ENCODE measurements at regions of chr2 and their contacts with region 1.

Region 1: GRCh38 chr2:58939388-58939787 is 698.3 kb upstream of the FANCL start:
- DNase-seq: peak; percentile 90
- ATAC-seq: peak; percentile 95
- H3K4me3 ChIP-seq: no peak overlapping the region
- H3K27ac ChIP-seq: peak overlapping the region; percentile 29; the same call in 1 of the 2 replicates
- H3K4me1 ChIP-seq: 0 out of 2 replicates have a peak, but pooled peaks cover 2% of the 10 kb centered on the region
- H3K27me3 ChIP-seq: no peaks in the 10 kb centered on the region
- CTCF ChIP-seq: no peak
- POLR2A ChIP-seq: no peak
- RAD21 ChIP-seq: no peak

Region 2: DNA sequence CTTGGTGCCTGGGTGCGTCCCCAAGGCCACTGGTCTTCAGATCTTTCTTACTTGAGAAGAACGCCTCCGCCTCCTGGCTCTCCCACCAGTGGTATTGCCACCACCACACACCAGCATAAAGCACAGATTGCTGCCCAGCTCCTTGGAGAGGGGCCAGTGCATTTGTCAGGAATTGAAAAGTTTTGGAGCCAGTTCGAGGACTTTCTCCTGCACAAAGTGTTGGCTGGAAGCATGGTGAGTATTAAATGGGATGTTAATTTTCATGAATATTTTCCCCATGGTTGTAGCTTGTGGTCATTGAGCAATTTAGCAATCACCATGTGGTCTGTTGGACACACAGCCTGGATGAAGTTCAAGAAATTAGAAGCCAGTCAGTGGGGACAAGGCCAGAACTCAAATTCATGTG is 13.7 kb before region 1 on chr2:
- CTCF ChIA-PET with region 1: no interaction called
- POLR2A ChIA-PET with region 1: interaction called, 6 read pairs
- dilution Hi-C with region 1: no loop called
- in situ Hi-C with region 1: no loop called
- intact Hi-C with region 1: loop called (anchors 2 kb)
- DNase-seq: peak; percentile 46
- ATAC-seq: no peak
- H3K4me3 ChIP-seq: no peak overlapping the region
- H3K27ac ChIP-seq: no peak overlapping the region
- H3K4me1 ChIP-seq: peaks cover 10% of the 10 kb centered on the region; the same call in 1 of the 2 replicates
- H3K27me3 ChIP-seq: no peaks in the 10 kb centered on the region
- CTCF ChIP-seq: no peak
- POLR2A ChIP-seq: no peak
- RAD21 ChIP-seq: no peak

Region 3: GRCh38 chr2:59378127-59378526 is 438.7 kb after region 1 on chr2:
- CTCF ChIA-PET with region 1: no interaction called
- POLR2A ChIA-PET with region 1: no interaction called
- dilution Hi-C with region 1: no loop called
- in situ Hi-C with region 1: no loop called
- intact Hi-C with region 1: no loop called
- DNase-seq: no peak
- ATAC-seq: no peak
- H3K4me3 ChIP-seq: no peak overlapping the region
- H3K27ac ChIP-seq: no peak overlapping the region
- H3K4me1 ChIP-seq: no peaks in the 10 kb centered on the region
- H3K27me3 ChIP-seq: no peaks in the 10 kb centered on the region
- CTCF ChIP-seq: no peak
- POLR2A ChIP-seq: no peak
- RAD21 ChIP-seq: no peak

Measured in IMR-90 (cell line).